Activated CD4-positive, alpha-beta T cell treated with anti-CD3 and anti-CD28 coated beads, Interleukin-2, amount 10 ng/mL, durations not matched to agents 24 days and 14 days (primary cell): ENCODE measurements at regions of chr19 and their contacts with region 1.

Region 1: GRCh38 chr19:35000651-35001424 is 715 bp downstream of the GRAMD1A start:
- DNase-seq: peak; percentile 85
- H3K4me3 Mint-ChIP-seq: peak overlapping the region; percentile 97
- H3K27ac Mint-ChIP-seq: peak overlapping the region; percentile 95
- H3K4me1 Mint-ChIP-seq: peaks cover 56% of the 10 kb centered on the region
- H3K27me3 Mint-ChIP-seq: no peaks in the 10 kb centered on the region

Region 2: GRCh38 chr19:34963573-34964409 is 37.0 kb before region 1 on chr19 and contains the start of gene ZNF792:
- intact Hi-C with region 1: no loop called
- DNase-seq: peak; percentile 84
- H3K4me3 Mint-ChIP-seq: peak within 1 kb of the TSS; percentile 96
- H3K27ac Mint-ChIP-seq: peak within 1 kb of the TSS; percentile 87
- H3K4me1 Mint-ChIP-seq: peaks cover 18% of the 10 kb centered on the region
- H3K27me3 Mint-ChIP-seq: no peaks in the 10 kb centered on the region
- total RNA-seq, gene ZNF792: 5.0 and 5.8 TPM in 2 replicates

Region 3: DNA sequence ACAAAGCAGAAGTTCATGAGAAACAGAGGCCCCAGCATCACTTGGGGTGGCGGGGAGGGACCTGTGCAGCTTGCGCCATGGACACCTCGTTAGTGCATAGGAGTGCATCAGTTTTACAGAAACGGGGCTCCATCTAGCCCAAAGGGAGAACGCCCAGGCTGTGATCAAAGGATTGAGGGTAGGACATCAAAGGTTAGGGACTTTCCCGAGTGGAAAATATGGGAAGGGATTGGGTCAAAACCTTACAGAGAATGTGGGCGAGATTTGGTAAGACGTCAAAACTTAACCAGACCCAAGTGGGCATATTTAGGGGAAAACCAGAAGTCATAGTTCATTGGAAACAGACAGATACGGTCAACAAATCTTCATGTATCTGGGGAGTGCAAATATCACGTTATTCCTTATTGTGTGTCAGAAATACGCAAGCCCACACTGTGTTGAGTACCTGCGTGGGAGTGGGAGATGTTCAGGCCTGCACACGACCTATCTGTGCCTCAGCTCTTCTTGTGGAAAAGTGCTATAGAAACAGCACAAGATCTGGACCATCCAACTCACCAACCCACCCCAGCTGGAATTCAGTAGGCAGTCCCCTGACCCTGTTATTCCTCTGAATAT is 10.2 kb before region 1 on chr19:
- intact Hi-C with region 1: loop called (anchors 1 kb)
- DNase-seq: no peak
- H3K4me3 Mint-ChIP-seq: peak overlapping the region; percentile 31
- H3K27ac Mint-ChIP-seq: peak overlapping the region; percentile 94
- H3K4me1 Mint-ChIP-seq: peaks cover 24% of the 10 kb centered on the region
- H3K27me3 Mint-ChIP-seq: peaks cover 2% of the 10 kb centered on the region